Activated naive CD4-positive, alpha-beta T cell treated with anti-CD3 and anti-CD28 coated beads for 36 hours (primary cell): ENCODE measurements at regions of chrX and their contacts with region 1.

Region 1: GRCh38 chrX:135050603-135051002 is 1.3 kb downstream of the RTL8A start:
- DNase-seq: no peak
- H3K4me3 Mint-ChIP-seq: peak overlapping the region; percentile 87
- H3K27ac Mint-ChIP-seq: no peak overlapping the region
- H3K4me1 Mint-ChIP-seq: peaks cover 21% of the 10 kb centered on the region
- H3K27me3 Mint-ChIP-seq: no peaks in the 10 kb centered on the region

Region 2: DNA sequence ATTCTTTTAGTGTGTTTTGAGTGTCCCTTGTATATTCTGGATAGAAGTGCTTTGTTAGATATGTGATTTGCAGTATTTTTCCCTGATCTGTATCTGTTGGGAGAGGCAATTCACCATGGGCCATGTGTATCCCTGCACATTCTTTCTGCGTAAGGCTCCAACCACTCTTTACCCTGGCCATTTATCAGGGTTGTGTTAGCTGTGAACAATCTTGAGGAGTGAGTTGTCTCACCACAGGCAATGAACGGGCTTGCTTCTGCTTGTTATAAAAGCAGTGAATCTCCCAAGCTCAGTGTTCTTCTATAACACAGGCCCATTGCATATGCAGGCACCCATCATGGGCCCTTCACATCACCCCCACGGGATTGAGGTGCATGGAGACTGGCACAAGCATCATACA is 78.7 kb before region 1 on chrX:
- CTCF ChIA-PET with region 1: no interaction called
- intact Hi-C with region 1: no loop called
- DNase-seq: no peak
- H3K4me3 Mint-ChIP-seq: no peak overlapping the region
- H3K27ac Mint-ChIP-seq: no peak overlapping the region
- H3K4me1 Mint-ChIP-seq: no peaks in the 10 kb centered on the region
- H3K27me3 Mint-ChIP-seq: no peaks in the 10 kb centered on the region

Region 3: GRCh38 chrX:135024526-135024925 is 26.1 kb before region 1 on chrX:
- CTCF ChIA-PET with region 1: no interaction called
- intact Hi-C with region 1: loop called (anchors 1 kb)
- DNase-seq: no peak
- H3K4me3 Mint-ChIP-seq: no peak overlapping the region
- H3K27ac Mint-ChIP-seq: no peak overlapping the region
- H3K4me1 Mint-ChIP-seq: peaks cover 14% of the 10 kb centered on the region
- H3K27me3 Mint-ChIP-seq: peaks cover 7% of the 10 kb centered on the region

Region 4: DNA sequence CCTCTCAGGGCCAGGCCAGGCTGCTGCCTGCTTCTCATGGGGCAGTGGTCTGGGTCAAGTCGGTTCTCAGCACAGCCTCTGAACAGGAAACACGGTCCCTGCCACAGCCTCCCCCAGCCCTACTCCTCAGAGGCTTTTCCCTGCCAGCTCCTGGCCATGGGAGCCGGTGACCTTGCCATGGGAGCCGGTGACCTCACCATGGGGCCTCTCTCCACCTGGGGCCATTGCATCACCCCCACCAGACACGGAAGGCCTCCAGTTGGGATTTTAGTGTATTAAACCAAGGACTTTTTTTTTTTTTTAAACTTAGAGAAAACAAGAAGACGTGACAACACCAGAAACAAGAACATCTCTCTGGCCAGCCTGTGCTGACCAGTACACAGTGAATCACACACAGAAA is 44.1 kb after region 1 on chrX:
- CTCF ChIA-PET with region 1: no interaction called
- intact Hi-C with region 1: no loop called
- DNase-seq: no peak
- H3K4me3 Mint-ChIP-seq: no peak overlapping the region
- H3K27ac Mint-ChIP-seq: no peak overlapping the region
- H3K4me1 Mint-ChIP-seq: peaks cover 2% of the 10 kb centered on the region
- H3K27me3 Mint-ChIP-seq: peaks cover 6% of the 10 kb centered on the region